CD8-positive, alpha-beta T cell (primary cell): ENCODE measurements at regions of chr10 and their contacts with region 1.

Region 1: DNA sequence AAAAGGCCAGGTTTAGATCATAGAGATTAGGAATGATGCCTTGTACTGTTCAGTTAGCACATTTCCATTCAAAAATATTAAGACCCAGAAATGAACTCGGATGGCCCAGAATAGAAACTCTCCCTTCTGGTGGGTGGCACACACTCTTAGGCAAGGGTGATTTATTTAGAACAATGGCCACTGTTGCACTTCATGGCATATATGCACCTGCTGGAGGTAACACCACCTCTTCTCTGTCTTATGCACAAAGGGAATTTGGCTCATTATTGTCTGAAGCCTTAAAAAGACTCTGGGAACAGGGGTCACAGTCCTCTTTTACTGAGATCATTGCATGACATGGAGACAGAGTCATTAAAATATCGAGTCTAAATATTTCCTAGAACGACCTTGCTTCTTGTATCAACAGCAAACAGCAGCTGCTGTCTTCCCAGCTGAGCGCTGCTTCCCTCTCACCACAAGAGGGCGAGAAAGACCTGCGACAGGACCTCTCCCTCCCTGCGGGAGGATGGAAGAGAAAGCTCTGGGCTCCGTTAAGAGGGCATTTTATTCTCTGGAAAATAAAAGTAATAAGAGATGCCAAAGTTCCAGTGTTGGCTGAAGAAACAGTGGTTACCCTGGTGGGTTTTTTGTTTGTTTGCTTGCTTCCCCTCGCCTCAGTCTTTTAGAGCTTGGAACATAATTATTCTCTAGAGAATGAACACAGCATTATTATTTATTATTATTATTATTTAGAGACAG is 13.6 kb upstream of the BAMBI start:
- DNase-seq: peak; percentile 31 to 78 (median 67)
- ATAC-seq: peak; percentile 88
- H3K4me3 ChIP-seq: no peak overlapping the region
- H3K4me3 Mint-ChIP-seq: no peak overlapping the region
- H3K27ac ChIP-seq: no peak overlapping the region
- H3K27ac Mint-ChIP-seq: no peak overlapping the region
- H3K4me1 ChIP-seq: peaks cover 4% of the 10 kb centered on the region
- H3K4me1 Mint-ChIP-seq: peaks cover 10% of the 10 kb centered on the region
- H3K27me3 ChIP-seq: peaks cover 10 to 15% of the 10 kb centered on the region in 2 experiments
- H3K27me3 Mint-ChIP-seq: peaks cover 40% of the 10 kb centered on the region
- CTCF ChIP-seq: peak; percentile 86

Region 2: DNA sequence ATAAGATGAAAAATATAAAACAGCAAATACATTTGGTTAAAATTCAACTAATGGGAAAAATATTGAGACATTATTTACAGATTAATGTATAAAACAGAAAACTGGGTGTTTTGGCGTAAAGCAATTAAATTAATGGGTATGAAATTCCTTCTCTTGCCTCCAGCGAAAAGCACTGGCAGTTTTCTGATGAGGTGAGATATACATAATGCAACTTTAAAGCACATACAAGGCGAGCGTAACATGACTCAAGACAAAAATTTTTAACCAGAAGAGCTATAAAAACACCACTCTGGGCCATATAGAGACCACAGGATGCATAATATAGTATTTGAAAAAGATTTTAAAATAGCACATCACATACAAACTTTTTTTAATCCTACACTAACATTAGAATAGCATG is 785.5 kb before region 1 on chr10:
- CTCF ChIA-PET with region 1: no interaction called
- POLR2A ChIA-PET with region 1: no interaction called
- intact Hi-C with region 1: no loop called
- DNase-seq: no peak
- ATAC-seq: no peak
- H3K4me3 ChIP-seq: no peak overlapping the region
- H3K4me3 Mint-ChIP-seq: no peak overlapping the region
- H3K27ac ChIP-seq: no peak overlapping the region
- H3K27ac Mint-ChIP-seq: no peak overlapping the region
- H3K4me1 ChIP-seq: no peaks in the 10 kb centered on the region
- H3K4me1 Mint-ChIP-seq: no peaks in the 10 kb centered on the region
- H3K27me3 ChIP-seq: peaks cover 0 to 2% of the 10 kb centered on the region in 2 experiments
- H3K27me3 Mint-ChIP-seq: no peaks in the 10 kb centered on the region
- CTCF ChIP-seq: no peak

Region 3: GRCh38 chr10:28676968-28677887 is 13.5 kb after region 1 on chr10 and contains the start of gene BAMBI:
- CTCF ChIA-PET with region 1: interaction called, 15 read pairs
- POLR2A ChIA-PET with region 1: no interaction called
- intact Hi-C with region 1: loop called in 1 of 2 experiments (anchors 1 kb)
- DNase-seq: peak; percentile 76 to 95 (median 88)
- ATAC-seq: peak; percentile 96
- H3K4me3 ChIP-seq: peak within 1 kb of the TSS; percentile 53 to 59
- H3K4me3 Mint-ChIP-seq: peak within 1 kb of the TSS; percentile 86
- H3K27ac ChIP-seq: no peak within 1 kb of the TSS
- H3K27ac Mint-ChIP-seq: no peak within 1 kb of the TSS
- H3K4me1 ChIP-seq: peaks cover 34% of the 10 kb centered on the region
- H3K4me1 Mint-ChIP-seq: peaks cover 31% of the 10 kb centered on the region
- H3K27me3 ChIP-seq: peaks cover 19 to 20% of the 10 kb centered on the region in 2 experiments
- H3K27me3 Mint-ChIP-seq: peaks cover 68% of the 10 kb centered on the region
- CTCF ChIP-seq: peak; percentile 40
- total RNA-seq, gene BAMBI: 3.5 to 3.6 TPM

Region 4: DNA sequence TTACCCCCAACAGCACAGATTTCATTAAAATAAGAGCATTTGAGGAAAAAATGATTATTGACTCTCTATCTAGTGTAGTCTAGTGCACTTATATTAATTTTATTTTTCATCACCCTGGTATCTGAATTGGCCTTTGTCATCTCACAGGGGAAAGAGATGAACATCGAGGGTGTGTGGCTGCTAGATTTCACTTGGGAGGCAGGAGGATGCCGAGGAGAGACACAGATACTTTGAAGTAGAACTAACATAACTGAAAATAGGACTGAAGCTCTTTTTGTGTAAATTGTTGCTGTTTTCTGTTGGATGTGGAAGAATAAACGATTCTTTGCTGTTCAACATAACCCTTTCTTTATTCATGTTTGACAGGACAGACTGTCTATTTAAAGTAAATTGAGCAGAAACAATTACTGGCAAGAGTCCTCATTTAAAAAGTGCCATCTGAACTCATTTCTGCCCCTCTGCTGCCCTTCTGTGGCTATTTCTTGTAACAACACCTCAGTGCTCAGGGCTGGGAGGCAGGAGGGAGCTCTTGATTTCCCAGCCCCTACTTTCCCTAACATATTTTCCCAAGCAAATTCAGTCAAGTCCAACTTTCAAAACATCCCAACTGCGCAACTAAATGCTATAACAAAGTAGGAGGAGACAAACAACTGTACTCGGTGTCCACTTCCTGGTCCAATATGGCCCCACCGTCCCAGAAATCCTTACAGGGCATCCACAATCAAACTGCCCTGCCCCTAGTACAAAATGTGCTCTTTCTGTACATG is 640.7 kb after region 1 on chr10:
- CTCF ChIA-PET with region 1: interaction called, 12 read pairs
- POLR2A ChIA-PET with region 1: no interaction called
- intact Hi-C with region 1: loop called in 1 of 2 experiments (anchors 1 kb)
- DNase-seq: peak in 3 of 9 experiments; percentile 10 to 46 (median 34)
- ATAC-seq: no peak
- H3K4me3 ChIP-seq: no peak overlapping the region
- H3K4me3 Mint-ChIP-seq: no peak overlapping the region
- H3K27ac ChIP-seq: no peak overlapping the region
- H3K27ac Mint-ChIP-seq: no peak overlapping the region
- H3K4me1 ChIP-seq: no peaks in the 10 kb centered on the region
- H3K4me1 Mint-ChIP-seq: peaks cover 2% of the 10 kb centered on the region
- H3K27me3 ChIP-seq: no peaks in the 10 kb centered on the region
- H3K27me3 Mint-ChIP-seq: peaks cover 35% of the 10 kb centered on the region
- CTCF ChIP-seq: peak; percentile 27

Region 5: DNA sequence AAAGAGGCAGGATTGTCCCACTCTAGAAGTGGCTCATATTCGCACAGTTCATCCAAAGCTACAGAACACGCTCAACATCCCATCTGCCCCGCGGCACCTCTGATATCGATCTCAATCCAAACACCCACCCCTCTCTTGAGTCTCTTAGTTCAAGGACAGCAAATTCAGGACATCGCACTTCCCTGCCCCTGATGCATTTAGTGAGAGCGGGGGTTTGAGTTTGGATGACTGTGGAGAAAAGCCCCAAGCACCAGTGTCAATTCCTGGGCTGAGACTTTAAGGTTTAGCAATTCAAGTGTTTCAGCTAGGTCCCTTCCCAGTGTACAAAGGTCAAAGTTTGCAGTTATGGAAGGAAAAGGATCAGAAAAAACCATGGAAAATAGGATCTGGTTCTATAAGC is 791.4 kb after region 1 on chr10:
- CTCF ChIA-PET with region 1: no interaction called
- POLR2A ChIA-PET with region 1: no interaction called
- intact Hi-C with region 1: loop called in 1 of 2 experiments (anchors 2 kb)
- DNase-seq: no peak
- ATAC-seq: no peak
- H3K4me3 ChIP-seq: no peak overlapping the region
- H3K4me3 Mint-ChIP-seq: no peak overlapping the region
- H3K27ac ChIP-seq: no peak overlapping the region
- H3K27ac Mint-ChIP-seq: peak overlapping the region; percentile 11
- H3K4me1 ChIP-seq: no peaks in the 10 kb centered on the region
- H3K4me1 Mint-ChIP-seq: no peaks in the 10 kb centered on the region
- H3K27me3 ChIP-seq: no peaks in the 10 kb centered on the region
- H3K27me3 Mint-ChIP-seq: no peaks in the 10 kb centered on the region
- CTCF ChIP-seq: no peak

Region 6: GRCh38 chr10:29517352-29517923 is 853.7 kb after region 1 on chr10:
- CTCF ChIA-PET with region 1: no interaction called
- POLR2A ChIA-PET with region 1: no interaction called
- intact Hi-C with region 1: loop called in 1 of 2 experiments (anchors 5 kb)
- DNase-seq: no peak
- ATAC-seq: no peak
- H3K4me3 ChIP-seq: no peak overlapping the region
- H3K4me3 Mint-ChIP-seq: no peak overlapping the region
- H3K27ac ChIP-seq: no peak overlapping the region
- H3K27ac Mint-ChIP-seq: no peak overlapping the region
- H3K4me1 ChIP-seq: no peaks in the 10 kb centered on the region
- H3K4me1 Mint-ChIP-seq: no peaks in the 10 kb centered on the region
- H3K27me3 ChIP-seq: no peaks in the 10 kb centered on the region
- H3K27me3 Mint-ChIP-seq: no peaks in the 10 kb centered on the region
- CTCF ChIP-seq: no peak